CD8-positive, alpha-beta T cell (primary cell): ENCODE measurements at regions of chrX and their contacts with region 1.

Region 1: DNA sequence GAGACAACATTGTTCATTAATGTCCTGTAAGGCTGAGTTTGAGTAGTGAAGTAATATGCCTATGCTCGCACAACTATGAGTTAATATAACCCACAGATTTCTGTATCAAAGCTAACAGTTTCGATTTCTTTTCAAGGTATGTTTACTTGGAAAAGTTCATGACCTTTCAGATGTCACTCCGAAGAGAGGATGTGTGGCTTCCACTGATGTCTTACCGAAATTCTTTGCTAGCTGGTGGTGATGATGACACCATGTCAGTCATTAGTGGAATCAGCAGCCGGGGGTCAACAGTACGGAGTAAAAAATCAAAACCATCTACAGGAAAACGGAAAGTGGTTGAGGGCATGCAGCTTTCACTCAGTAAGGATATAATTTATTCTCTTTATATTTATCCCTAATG is 124.9 kb downstream of the STAG2 start:
- DNase-seq: peak in 7 of 9 experiments; percentile 1 to 70 (median 16)
- ATAC-seq: peak; percentile 90
- H3K4me3 ChIP-seq: no peak overlapping the region
- H3K4me3 Mint-ChIP-seq: peak overlapping the region; percentile 32
- H3K27ac ChIP-seq: peak overlapping the region; percentile 36 to 43
- H3K27ac Mint-ChIP-seq: peak overlapping the region; percentile 94
- H3K4me1 ChIP-seq: peaks cover 7% of the 10 kb centered on the region
- H3K4me1 Mint-ChIP-seq: peaks cover 34% of the 10 kb centered on the region
- H3K27me3 ChIP-seq: no peaks in the 10 kb centered on the region
- H3K27me3 Mint-ChIP-seq: no peaks in the 10 kb centered on the region
- CTCF ChIP-seq: no peak

Region 2: DNA sequence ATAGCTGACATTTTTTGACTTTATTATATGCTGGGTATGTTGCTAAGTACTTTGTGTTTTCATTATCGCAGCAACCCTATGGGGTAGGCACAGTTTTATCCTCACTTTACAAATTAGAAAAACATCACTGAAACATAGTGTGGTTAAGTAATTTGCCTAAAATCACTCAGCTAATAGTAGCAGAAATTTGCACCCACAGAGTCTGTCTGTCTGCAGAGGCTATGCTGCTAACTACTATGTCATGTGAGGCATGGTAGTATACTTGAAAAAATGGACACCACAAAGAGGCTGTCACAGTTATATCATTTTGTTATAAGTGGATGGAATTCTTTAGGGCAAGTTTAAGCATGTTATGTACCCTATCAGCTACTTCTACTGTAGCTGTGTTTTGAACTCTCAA is 55.9 kb before region 1 on chrX:
- CTCF ChIA-PET with region 1: no interaction called
- POLR2A ChIA-PET with region 1: no interaction called
- intact Hi-C with region 1: loop called in 1 of 2 experiments (anchors 5 kb)
- DNase-seq: no peak
- ATAC-seq: no peak
- H3K4me3 ChIP-seq: no peak overlapping the region
- H3K4me3 Mint-ChIP-seq: no peak overlapping the region
- H3K27ac ChIP-seq: no peak overlapping the region
- H3K27ac Mint-ChIP-seq: no peak overlapping the region
- H3K4me1 ChIP-seq: no peaks in the 10 kb centered on the region
- H3K4me1 Mint-ChIP-seq: peaks cover 10% of the 10 kb centered on the region
- H3K27me3 ChIP-seq: no peaks in the 10 kb centered on the region
- H3K27me3 Mint-ChIP-seq: no peaks in the 10 kb centered on the region
- CTCF ChIP-seq: no peak